Activated T-helper 2 cell treated with anti-CD3 and anti-CD28 coated beads, Interferon-gamma antibody, Interleukin-2, Interleukin-4, amounts not matched to agents 10 μg/mL and 5 μg/mL and 100 μg/mL, durations not matched to agents 14 hours and 24 hours and 36 hours (primary cell): ENCODE measurements at regions of chr4 and their contacts with region 1.

Region 1: GRCh38 chr4:118113220-118113619 is 78.9 kb downstream of the NDST3 start:
- DNase-seq: no peak
- H3K4me3 Mint-ChIP-seq: no peak overlapping the region
- H3K27ac Mint-ChIP-seq: no peak overlapping the region
- H3K4me1 Mint-ChIP-seq: peaks cover 22% of the 10 kb centered on the region
- H3K27me3 Mint-ChIP-seq: no peaks in the 10 kb centered on the region

Region 2: GRCh38 chr4:117983541-117984365 is 129.5 kb before region 1 on chr4:
- intact Hi-C with region 1: no loop called
- DNase-seq: no peak
- H3K4me3 Mint-ChIP-seq: no peak overlapping the region
- H3K27ac Mint-ChIP-seq: no peak overlapping the region
- H3K4me1 Mint-ChIP-seq: peaks cover 6% of the 10 kb centered on the region
- H3K27me3 Mint-ChIP-seq: no peaks in the 10 kb centered on the region

Region 3: GRCh38 chr4:118099106-118099505 is 14.1 kb before region 1 on chr4:
- intact Hi-C with region 1: no loop called
- DNase-seq: no peak
- H3K4me3 Mint-ChIP-seq: no peak overlapping the region
- H3K27ac Mint-ChIP-seq: no peak overlapping the region
- H3K4me1 Mint-ChIP-seq: peaks cover 3% of the 10 kb centered on the region
- H3K27me3 Mint-ChIP-seq: peaks cover 8% of the 10 kb centered on the region

Region 4: DNA sequence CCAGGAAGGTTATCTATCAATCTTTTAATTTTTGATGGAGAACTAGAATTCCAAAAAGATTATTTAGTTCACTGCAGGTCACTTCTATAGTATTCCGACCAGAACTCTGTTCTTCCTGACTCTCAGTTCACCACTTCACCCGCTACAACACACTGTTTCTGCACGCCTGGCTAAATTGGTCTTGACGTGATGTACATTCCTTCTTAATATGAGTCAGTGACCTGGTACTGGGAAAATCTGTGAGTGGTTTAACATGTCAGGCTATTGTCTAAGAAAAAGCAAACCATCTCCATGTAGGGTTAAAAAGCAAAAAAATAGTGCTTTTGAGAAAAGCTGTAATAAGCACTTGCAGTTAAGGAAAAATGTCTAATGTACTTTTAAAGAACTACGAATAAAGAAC is 41.4 kb after region 1 on chr4:
- intact Hi-C with region 1: loop called (anchors 1 kb)
- DNase-seq: no peak
- H3K4me3 Mint-ChIP-seq: no peak overlapping the region
- H3K27ac Mint-ChIP-seq: no peak overlapping the region
- H3K4me1 Mint-ChIP-seq: peaks cover 17% of the 10 kb centered on the region
- H3K27me3 Mint-ChIP-seq: no peaks in the 10 kb centered on the region

Region 5: GRCh38 chr4:118398226-118399090 is 285.2 kb after region 1 on chr4:
- intact Hi-C with region 1: no loop called
- DNase-seq: no peak
- H3K4me3 Mint-ChIP-seq: no peak overlapping the region
- H3K27ac Mint-ChIP-seq: no peak overlapping the region
- H3K4me1 Mint-ChIP-seq: no peaks in the 10 kb centered on the region
- H3K27me3 Mint-ChIP-seq: peaks cover 2% of the 10 kb centered on the region